ENCODE measurements at regions of chr17 and their contacts with region 1.

Region 1: GRCh38 chr17:74379495-74380085 is 12.3 kb downstream of the GPR142 start:
- DNase-seq: peak; percentile 81 to 93 (median 89)
- H3K4me3 ChIP-seq: no peak overlapping the region
- H3K4me3 Mint-ChIP-seq: peak overlapping the region in 2 of 7 donors; percentile 14 to 69
- H3K27ac ChIP-seq: no peak overlapping the region
- H3K27ac Mint-ChIP-seq: peak overlapping the region in 1 of 8 donors; percentile 81
- H3K4me1 ChIP-seq: peaks cover 14% of the 10 kb centered on the region
- H3K4me1 Mint-ChIP-seq: peaks cover 4 to 13% (median 10%) of the 10 kb centered on the region in 3 donors
- H3K27me3 ChIP-seq: no peaks in the 10 kb centered on the region
- H3K27me3 Mint-ChIP-seq: peaks cover 0 to under 1% of the 10 kb centered on the region in 2 donors

Region 2: DNA sequence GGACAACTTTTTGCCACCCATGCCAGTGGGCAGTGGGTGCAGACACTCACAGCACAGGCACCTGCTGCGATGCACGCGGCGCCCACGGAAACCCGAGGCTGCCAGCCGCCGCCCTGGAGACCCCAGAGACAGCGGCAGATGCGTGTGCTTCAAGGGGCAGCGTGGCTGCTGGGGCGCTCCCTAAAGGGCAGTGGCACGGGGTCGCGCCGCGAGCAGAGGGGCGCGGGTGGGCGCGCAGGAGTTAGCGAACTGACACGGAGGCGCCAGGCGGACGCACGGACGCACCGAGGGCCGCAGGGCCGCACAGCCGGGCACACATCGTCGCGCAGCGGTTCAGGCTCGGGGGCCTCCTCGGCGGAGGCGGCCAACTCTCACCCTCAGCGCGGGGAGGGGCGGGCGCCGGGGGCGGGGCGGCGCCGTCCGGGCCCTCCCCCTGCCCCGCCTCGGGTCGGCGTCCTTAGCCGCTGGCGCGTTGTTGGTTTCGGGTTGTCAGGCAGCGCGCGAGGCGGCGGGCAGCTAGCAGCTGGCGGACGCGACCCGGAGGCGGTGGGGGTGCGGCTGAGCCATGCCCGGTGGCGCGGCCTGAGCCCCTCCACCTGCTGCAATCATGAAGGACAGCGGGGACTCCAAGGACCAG is 53.7 kb before region 1 on chr17 and contains the start of gene KIF19:
- CTCF ChIA-PET with region 1: no interaction called
- POLR2A ChIA-PET with region 1: no interaction called
- DNase-seq: peak in 4 of 5 donors; percentile 42 to 64 (median 53)
- H3K4me3 ChIP-seq: peak within 1 kb of the TSS; percentile 37
- H3K4me3 Mint-ChIP-seq: peak within 1 kb of the TSS; percentile 64 to 86 (median 68)
- H3K27ac ChIP-seq: no peak within 1 kb of the TSS
- H3K27ac Mint-ChIP-seq: peak within 1 kb of the TSS in 4 of 8 donors; percentile 10 to 89 (median 58)
- H3K4me1 ChIP-seq: peaks cover 24% of the 10 kb centered on the region
- H3K4me1 Mint-ChIP-seq: peaks cover 22 to 41% (median 22%) of the 10 kb centered on the region in 3 donors
- H3K27me3 ChIP-seq: no peaks in the 10 kb centered on the region
- H3K27me3 Mint-ChIP-seq: peaks cover 0 to 4% of the 10 kb centered on the region in 2 donors
- total RNA-seq, gene KIF19: 0.20 to 0.24 TPM

Region 3: DNA sequence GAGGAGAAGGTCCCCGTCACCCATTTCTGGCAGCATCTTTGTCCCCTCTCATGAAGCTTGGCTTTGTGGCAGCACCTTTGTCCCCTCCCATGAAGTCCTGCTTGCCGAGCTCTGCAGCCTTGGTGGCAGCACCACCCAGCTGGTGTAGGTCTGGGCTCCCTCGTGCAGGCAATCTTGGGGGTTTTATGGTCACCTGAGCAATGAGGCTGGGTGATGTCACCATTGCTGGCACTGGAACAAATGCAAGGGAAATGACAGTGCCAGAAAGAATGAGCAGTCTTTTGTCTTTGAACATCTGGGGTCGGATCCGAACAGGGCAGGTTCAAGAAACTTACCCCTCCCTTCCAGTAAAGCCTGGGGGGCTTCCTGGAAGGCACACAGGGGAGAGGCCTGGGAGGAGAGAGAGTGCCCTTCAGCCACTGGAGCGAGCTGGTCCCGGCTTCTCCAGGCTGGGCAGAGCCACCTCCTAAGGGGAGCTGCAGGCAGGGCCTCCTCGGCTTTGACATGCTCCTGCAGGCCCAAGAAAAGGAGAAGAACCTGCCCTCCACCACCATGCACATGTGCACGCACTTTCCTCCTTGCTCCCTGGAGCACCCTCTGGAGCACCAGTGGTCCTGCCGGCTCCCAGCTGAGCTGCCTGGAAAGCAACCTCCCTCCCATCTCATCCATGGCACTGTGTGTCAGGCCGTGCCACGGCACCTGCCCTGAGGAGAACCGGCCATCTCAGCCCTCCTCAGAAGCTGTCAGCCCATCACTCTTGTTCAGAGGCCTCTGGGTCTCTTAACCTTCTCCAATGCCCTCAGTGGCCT is 34.0 kb before region 1 on chr17:
- CTCF ChIA-PET with region 1: no interaction called
- POLR2A ChIA-PET with region 1: no interaction called
- DNase-seq: no peak
- H3K4me3 ChIP-seq: no peak overlapping the region
- H3K4me3 Mint-ChIP-seq: no peak overlapping the region
- H3K27ac ChIP-seq: no peak overlapping the region
- H3K27ac Mint-ChIP-seq: no peak overlapping the region
- H3K4me1 ChIP-seq: no peaks in the 10 kb centered on the region
- H3K4me1 Mint-ChIP-seq: no peaks in the 10 kb centered on the region
- H3K27me3 ChIP-seq: no peaks in the 10 kb centered on the region
- H3K27me3 Mint-ChIP-seq: peaks cover 7 to 13% of the 10 kb centered on the region in 2 donors

Region 4: DNA sequence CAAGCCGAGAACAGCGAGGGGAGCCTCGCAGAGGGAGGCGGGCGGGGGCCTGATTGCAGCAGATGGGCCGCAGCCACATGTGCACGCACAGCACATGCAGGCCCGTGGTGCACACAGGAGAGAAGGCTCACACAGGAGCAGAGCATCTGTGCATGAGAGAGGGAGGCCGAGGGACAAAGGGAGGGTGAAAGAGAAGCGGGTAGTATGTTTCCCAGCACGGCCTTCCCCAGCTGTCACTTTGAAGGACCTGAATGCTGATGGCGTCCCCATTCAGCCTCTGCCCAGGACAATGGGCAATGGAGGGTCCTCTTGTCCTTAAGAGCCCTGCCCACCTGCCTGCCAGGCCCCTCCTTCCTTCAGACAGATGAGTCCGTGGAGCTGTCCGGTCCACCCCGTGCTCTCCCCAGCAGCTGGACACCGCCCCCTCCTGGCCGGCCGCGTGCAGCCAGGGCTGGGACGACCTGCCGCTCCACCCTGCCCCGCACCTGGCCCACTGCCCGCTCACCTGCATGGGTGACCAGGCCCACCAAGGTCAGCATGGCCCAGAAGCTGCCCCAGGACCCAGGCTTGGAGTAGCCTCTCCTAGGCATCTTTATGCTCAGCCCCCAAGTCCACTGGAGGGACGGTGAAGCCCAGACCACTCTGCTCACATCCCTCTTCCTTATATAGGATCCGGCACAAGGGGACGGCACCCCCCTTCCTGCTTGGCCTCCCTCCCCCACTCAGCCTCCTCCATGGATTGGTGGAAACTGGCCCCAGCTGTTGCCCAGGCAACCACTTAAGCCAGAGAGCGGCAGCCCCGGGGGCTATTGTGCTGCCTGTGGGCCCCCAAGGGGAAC is 18.1 kb before region 1 on chr17 and contains the start of gene BTBD17:
- CTCF ChIA-PET with region 1: interaction called, 44 read pairs
- POLR2A ChIA-PET with region 1: no interaction called
- DNase-seq: peak in 3 of 5 donors; percentile 13 to 62 (median 18)
- H3K4me3 ChIP-seq: no peak within 1 kb of the TSS
- H3K4me3 Mint-ChIP-seq: no peak within 1 kb of the TSS
- H3K27ac ChIP-seq: no peak within 1 kb of the TSS
- H3K27ac Mint-ChIP-seq: no peak within 1 kb of the TSS
- H3K4me1 ChIP-seq: no peaks in the 10 kb centered on the region
- H3K4me1 Mint-ChIP-seq: peaks cover 4 to 10% (median 6%) of the 10 kb centered on the region in 3 donors
- H3K27me3 ChIP-seq: peaks cover 17% of the 10 kb centered on the region
- H3K27me3 Mint-ChIP-seq: peaks cover 19 to 31% of the 10 kb centered on the region in 2 donors
- total RNA-seq, gene BTBD17: not detected

Region 5: DNA sequence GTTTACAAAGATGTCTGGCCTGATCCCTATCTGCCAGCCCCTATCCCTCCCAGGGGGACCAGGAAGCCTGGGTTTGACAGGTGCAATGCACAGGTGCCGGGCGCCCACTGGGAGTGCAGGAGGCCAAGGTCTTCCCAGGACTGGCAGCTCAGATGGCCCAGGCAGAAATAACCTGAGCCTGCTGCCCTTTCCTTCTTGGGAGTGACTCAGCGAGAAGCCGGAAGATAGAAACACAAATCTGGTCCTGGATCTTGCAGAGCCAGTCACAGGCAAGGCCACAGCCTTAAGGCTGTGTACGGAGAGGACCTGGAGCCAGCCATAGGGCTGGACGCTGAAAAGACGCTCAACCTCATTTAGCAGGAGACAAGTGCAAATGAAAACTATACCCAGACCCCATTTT is 15.4 kb after region 1 on chr17:
- CTCF ChIA-PET with region 1: interaction called, 24 read pairs
- POLR2A ChIA-PET with region 1: no interaction called
- DNase-seq: no peak
- H3K4me3 ChIP-seq: no peak overlapping the region
- H3K4me3 Mint-ChIP-seq: no peak overlapping the region
- H3K27ac ChIP-seq: no peak overlapping the region
- H3K27ac Mint-ChIP-seq: no peak overlapping the region
- H3K4me1 ChIP-seq: no peaks in the 10 kb centered on the region
- H3K4me1 Mint-ChIP-seq: no peaks in the 10 kb centered on the region
- H3K27me3 ChIP-seq: peaks cover 3% of the 10 kb centered on the region
- H3K27me3 Mint-ChIP-seq: peaks cover 8 to 15% of the 10 kb centered on the region in 2 donors

Region 6: GRCh38 chr17:74457146-74457819 is 77.7 kb after region 1 on chr17:
- CTCF ChIA-PET with region 1: interaction called, 88 read pairs
- POLR2A ChIA-PET with region 1: interaction called, 5 read pairs
- DNase-seq: peak; percentile 49 to 79 (median 63)
- H3K4me3 ChIP-seq: no peak overlapping the region
- H3K4me3 Mint-ChIP-seq: peak overlapping the region in 6 of 7 donors; percentile 8 to 61 (median 32)
- H3K27ac ChIP-seq: no peak overlapping the region
- H3K27ac Mint-ChIP-seq: peak overlapping the region in 4 of 8 donors; percentile 8 to 73 (median 62)
- H3K4me1 ChIP-seq: peaks cover 40% of the 10 kb centered on the region
- H3K4me1 Mint-ChIP-seq: peaks cover 51 to 62% (median 54%) of the 10 kb centered on the region in 3 donors
- H3K27me3 ChIP-seq: no peaks in the 10 kb centered on the region
- H3K27me3 Mint-ChIP-seq: peaks cover 0 to 3% of the 10 kb centered on the region in 2 donors

Region 7: GRCh38 chr17:74493381-74493833 is 113.8 kb after region 1 on chr17:
- CTCF ChIA-PET with region 1: interaction called, 44 read pairs
- POLR2A ChIA-PET with region 1: no interaction called
- DNase-seq: peak; percentile 46 to 75 (median 59)
- H3K4me3 ChIP-seq: no peak overlapping the region
- H3K4me3 Mint-ChIP-seq: no peak overlapping the region
- H3K27ac ChIP-seq: no peak overlapping the region
- H3K27ac Mint-ChIP-seq: peak overlapping the region in 1 of 8 donors; percentile 33
- H3K4me1 ChIP-seq: no peaks in the 10 kb centered on the region
- H3K4me1 Mint-ChIP-seq: peaks cover 20 to 26% (median 23%) of the 10 kb centered on the region in 3 donors
- H3K27me3 ChIP-seq: no peaks in the 10 kb centered on the region
- H3K27me3 Mint-ChIP-seq: no peaks in the 10 kb centered on the region

Region 8: GRCh38 chr17:74532115-74532514 is 152.5 kb after region 1 on chr17:
- CTCF ChIA-PET with region 1: interaction called, 10 read pairs
- POLR2A ChIA-PET with region 1: interaction called, 5 read pairs
- DNase-seq: no peak
- H3K4me3 ChIP-seq: no peak overlapping the region
- H3K4me3 Mint-ChIP-seq: peak overlapping the region in 1 of 7 donors; percentile 32
- H3K27ac ChIP-seq: no peak overlapping the region
- H3K27ac Mint-ChIP-seq: peak overlapping the region in 1 of 8 donors; percentile 40
- H3K4me1 ChIP-seq: no peaks in the 10 kb centered on the region
- H3K4me1 Mint-ChIP-seq: peaks cover 3 to 5% (median 3%) of the 10 kb centered on the region in 3 donors
- H3K27me3 ChIP-seq: peaks cover 9% of the 10 kb centered on the region
- H3K27me3 Mint-ChIP-seq: peaks cover 19 to 70% of the 10 kb centered on the region in 2 donors

Region 9: GRCh38 chr17:74619077-74619673 is 239.6 kb after region 1 on chr17:
- CTCF ChIA-PET with region 1: no interaction called
- POLR2A ChIA-PET with region 1: no interaction called
- DNase-seq: no peak
- H3K4me3 ChIP-seq: no peak overlapping the region
- H3K4me3 Mint-ChIP-seq: no peak overlapping the region
- H3K27ac ChIP-seq: no peak overlapping the region
- H3K27ac Mint-ChIP-seq: no peak overlapping the region
- H3K4me1 ChIP-seq: no peaks in the 10 kb centered on the region
- H3K4me1 Mint-ChIP-seq: no peaks in the 10 kb centered on the region
- H3K27me3 ChIP-seq: peaks cover 13% of the 10 kb centered on the region
- H3K27me3 Mint-ChIP-seq: peaks cover 24 to 79% of the 10 kb centered on the region in 2 donors

Measured in CD8-positive, alpha-beta memory T cell (primary cell).